IMR-90 (cell line): ENCODE measurements at regions of chr3 and their contacts with region 1.

Region 1: GRCh38 chr3:150775091-150775501 is 12.1 kb upstream of the SIAH2 start:
- DNase-seq: peak; percentile 89
- ATAC-seq: peak; percentile 90
- H3K4me3 ChIP-seq: no peak overlapping the region
- H3K27ac ChIP-seq: no peak overlapping the region
- H3K4me1 ChIP-seq: peaks cover 6% of the 10 kb centered on the region
- H3K27me3 ChIP-seq: no peaks in the 10 kb centered on the region
- CTCF ChIP-seq: no peak
- POLR2A ChIP-seq: no peak
- RAD21 ChIP-seq: no peak

Region 2: GRCh38 chr3:150787741-150788370 is 12.8 kb after region 1 on chr3:
- CTCF ChIA-PET with region 1: interaction called, 11 read pairs
- POLR2A ChIA-PET with region 1: no interaction called
- dilution Hi-C with region 1: no loop called
- in situ Hi-C with region 1: no loop called
- intact Hi-C with region 1: no loop called
- DNase-seq: peak; percentile 64
- ATAC-seq: peak; percentile 93
- H3K4me3 ChIP-seq: no peak overlapping the region
- H3K27ac ChIP-seq: no peak overlapping the region
- H3K4me1 ChIP-seq: no peaks in the 10 kb centered on the region
- H3K27me3 ChIP-seq: peaks cover 23% of the 10 kb centered on the region
- CTCF ChIP-seq: peak; percentile 81
- POLR2A ChIP-seq: no peak
- RAD21 ChIP-seq: peak; percentile 73

Region 3: GRCh38 chr3:151062611-151063010 is 287.5 kb after region 1 on chr3:
- CTCF ChIA-PET with region 1: no interaction called
- POLR2A ChIA-PET with region 1: no interaction called
- dilution Hi-C with region 1: no loop called
- in situ Hi-C with region 1: no loop called
- intact Hi-C with region 1: no loop called
- DNase-seq: no peak
- ATAC-seq: no peak
- H3K4me3 ChIP-seq: no peak overlapping the region
- H3K27ac ChIP-seq: no peak overlapping the region
- H3K4me1 ChIP-seq: no peaks in the 10 kb centered on the region
- H3K27me3 ChIP-seq: peaks cover 4% of the 10 kb centered on the region
- CTCF ChIP-seq: no peak
- POLR2A ChIP-seq: no peak
- RAD21 ChIP-seq: no peak